CD4-positive, alpha-beta T cell (primary cell): ENCODE measurements at regions of chr15 and their contacts with region 1.

Region 1: DNA sequence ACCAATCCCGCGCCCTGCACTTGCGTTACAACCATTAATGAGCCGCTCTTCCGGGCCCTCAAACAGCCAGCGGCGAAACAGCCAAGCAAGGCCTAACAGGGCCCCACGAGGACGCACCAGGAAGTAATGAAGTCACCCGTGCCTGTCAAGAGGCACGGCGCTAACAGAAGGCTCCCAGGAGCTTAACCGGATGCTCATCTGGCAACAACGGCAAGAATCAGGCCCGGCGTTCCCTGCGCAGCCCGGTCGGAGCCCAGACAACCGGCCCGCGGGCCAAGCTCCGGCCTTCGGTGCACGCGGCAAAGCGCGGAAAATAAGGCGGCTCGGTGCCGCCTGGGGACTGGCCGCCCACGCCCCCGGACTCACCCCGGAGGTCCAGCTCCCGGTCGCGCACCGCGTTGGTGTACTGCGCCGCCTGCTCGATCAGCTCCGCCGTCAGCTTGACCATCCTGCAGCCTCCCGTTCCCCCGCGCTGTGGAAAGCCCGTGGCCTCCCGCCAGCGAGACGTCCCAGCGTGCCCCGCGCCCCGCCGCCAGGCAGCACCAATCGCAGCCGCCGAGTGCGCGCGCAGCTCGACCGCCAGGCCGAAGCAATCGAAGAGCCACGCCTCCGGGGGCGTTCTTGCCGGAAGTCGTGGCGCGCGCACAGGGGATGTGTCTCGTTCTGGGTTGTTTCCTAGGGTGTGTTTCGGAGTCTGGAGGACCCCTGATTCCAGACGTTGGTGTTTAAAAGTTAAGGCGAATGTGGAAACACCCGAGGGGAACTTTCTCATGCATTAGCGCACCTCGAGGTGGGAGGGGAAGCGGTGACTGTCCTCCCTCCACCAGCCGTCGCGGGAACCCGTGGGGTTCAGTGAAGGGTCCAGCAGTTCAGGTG is at the start of gene SNRPA1:
- DNase-seq: peak; percentile 94 to 99 (median 97)
- ATAC-seq: peak; percentile 80
- H3K4me3 ChIP-seq: peak within 1 kb of the TSS; percentile 90
- H3K4me3 Mint-ChIP-seq: peak within 1 kb of the TSS; percentile 100
- H3K27ac ChIP-seq: peak within 1 kb of the TSS; percentile 95 to 98
- H3K27ac Mint-ChIP-seq: peak within 1 kb of the TSS; percentile 98
- H3K4me1 ChIP-seq: peaks cover 35% of the 10 kb centered on the region
- H3K4me1 Mint-ChIP-seq: peaks cover 60% of the 10 kb centered on the region
- H3K27me3 ChIP-seq: no peaks in the 10 kb centered on the region
- H3K27me3 Mint-ChIP-seq: no peaks in the 10 kb centered on the region
- CTCF ChIP-seq: no peak
- total RNA-seq, gene SNRPA1: 214 to 222 TPM

Region 2: DNA sequence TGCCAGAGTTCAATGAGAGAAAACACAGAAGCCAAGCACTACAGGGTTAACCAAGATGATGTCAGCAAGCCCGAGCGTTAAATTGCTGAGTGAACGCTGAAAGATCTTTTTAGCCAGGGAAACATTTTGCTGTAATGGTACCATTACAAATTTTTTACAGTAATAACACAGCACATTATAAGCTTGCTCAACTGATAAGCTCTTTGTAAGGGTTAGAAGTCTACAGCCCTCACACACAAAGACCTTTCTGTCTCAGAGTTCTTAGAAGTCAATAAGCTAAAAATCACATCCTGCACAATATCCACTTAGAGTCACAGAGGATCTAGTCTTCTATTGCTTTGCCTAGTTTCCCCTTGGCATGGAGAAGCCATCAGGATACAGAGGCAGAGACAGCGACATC is 73.1 kb before region 1 on chr15:
- CTCF ChIA-PET with region 1: no interaction called
- POLR2A ChIA-PET with region 1: no interaction called
- intact Hi-C with region 1: no loop called
- DNase-seq: no peak
- ATAC-seq: no peak
- H3K4me3 ChIP-seq: no peak overlapping the region
- H3K4me3 Mint-ChIP-seq: no peak overlapping the region
- H3K27ac ChIP-seq: no peak overlapping the region
- H3K27ac Mint-ChIP-seq: no peak overlapping the region
- H3K4me1 ChIP-seq: peaks cover 8% of the 10 kb centered on the region
- H3K4me1 Mint-ChIP-seq: peaks cover 75% of the 10 kb centered on the region
- H3K27me3 ChIP-seq: no peaks in the 10 kb centered on the region
- H3K27me3 Mint-ChIP-seq: no peaks in the 10 kb centered on the region
- CTCF ChIP-seq: no peak

Region 3: DNA sequence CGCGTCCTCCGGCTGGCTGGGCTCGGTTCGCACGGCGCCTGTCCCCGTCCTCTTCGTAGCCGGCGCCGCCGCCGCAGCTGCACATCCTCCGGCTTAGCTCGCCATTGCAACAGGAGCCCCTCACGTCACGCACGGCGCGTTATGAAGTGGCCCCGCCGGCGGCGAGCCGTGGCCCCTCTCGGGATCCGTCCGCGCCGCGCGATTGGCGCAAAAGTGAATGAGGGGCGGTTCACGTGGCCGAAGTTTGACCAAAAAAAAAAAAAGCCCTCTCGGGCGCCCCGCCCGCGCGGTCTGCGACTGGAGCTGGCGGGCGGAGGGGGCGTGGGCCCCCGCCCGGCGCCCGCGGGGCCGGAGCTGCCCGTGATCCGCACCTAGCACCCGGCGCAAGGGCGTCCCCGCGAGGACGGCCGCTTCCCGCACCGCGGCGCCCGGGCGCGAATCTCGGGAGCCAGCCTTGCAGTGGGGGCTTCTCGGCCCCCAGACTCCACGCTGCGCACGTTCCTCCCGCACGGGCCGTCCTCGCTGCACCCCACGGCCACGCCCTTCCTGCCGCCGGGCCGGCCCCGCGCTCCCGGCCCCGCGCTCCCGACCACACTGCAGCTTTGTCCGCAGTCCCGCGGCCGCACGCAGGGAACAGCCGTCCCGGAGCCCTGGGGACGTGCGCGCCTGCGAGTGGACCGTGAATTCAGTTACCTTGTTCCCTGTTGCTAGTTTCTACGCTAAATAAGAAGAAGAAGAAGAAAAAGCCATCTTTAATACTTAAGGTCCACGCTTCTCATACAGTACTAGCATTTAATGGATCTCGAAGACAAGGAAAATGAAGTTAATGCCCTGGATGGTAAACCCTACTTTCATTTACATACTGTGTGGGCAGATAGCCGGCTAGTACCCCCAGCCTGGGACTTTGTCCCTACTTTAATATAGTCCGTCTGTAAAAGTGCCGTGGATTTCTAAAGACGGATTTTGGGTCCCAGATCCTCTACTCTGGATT is 42.8 kb before region 1 on chr15 and contains the start of gene CHSY1:
- CTCF ChIA-PET with region 1: no interaction called
- POLR2A ChIA-PET with region 1: interaction called, 17 read pairs
- intact Hi-C with region 1: no loop called
- DNase-seq: peak; percentile 61 to 93 (median 76)
- ATAC-seq: peak; percentile 75
- H3K4me3 ChIP-seq: peak within 1 kb of the TSS; percentile 66
- H3K4me3 Mint-ChIP-seq: peak within 1 kb of the TSS; percentile 100
- H3K27ac ChIP-seq: no peak within 1 kb of the TSS
- H3K27ac Mint-ChIP-seq: peak within 1 kb of the TSS; percentile 89
- H3K4me1 ChIP-seq: peaks cover 25% of the 10 kb centered on the region
- H3K4me1 Mint-ChIP-seq: peaks cover 38% of the 10 kb centered on the region
- H3K27me3 ChIP-seq: no peaks in the 10 kb centered on the region
- H3K27me3 Mint-ChIP-seq: no peaks in the 10 kb centered on the region
- CTCF ChIP-seq: no peak
- total RNA-seq, gene CHSY1: 5.8 to 6.7 TPM

Region 4: DNA sequence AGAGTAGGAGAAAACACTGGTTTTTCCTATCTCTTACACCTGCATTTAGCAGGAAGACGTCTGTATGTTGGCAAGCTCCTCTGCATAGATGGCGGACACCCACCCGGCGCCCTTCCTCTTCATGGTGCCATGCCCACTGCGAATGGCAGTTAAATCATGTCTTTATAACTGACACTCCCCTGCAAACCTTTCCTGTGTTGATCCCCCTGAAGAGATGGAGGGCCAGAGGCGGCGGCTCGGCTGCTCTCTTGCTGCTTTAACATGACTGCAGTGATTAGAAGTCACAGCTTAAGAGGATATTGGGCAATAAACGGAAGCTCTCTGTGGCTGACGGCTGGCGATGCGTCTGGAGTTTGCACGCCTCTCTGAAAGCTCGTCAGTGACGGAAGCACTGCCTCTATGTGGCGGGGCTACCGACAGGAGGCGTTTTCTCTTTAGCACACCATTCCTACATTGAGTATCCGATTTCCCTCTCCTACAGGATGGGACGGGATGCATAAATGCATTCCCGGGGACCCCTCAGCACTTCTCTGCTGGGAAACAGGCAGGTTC is 25.6 kb after region 1 on chr15:
- CTCF ChIA-PET with region 1: interaction called, 5 read pairs
- POLR2A ChIA-PET with region 1: interaction called, 27 read pairs
- intact Hi-C with region 1: no loop called
- DNase-seq: peak; percentile 22 to 84 (median 52)
- ATAC-seq: peak; percentile 99
- H3K4me3 ChIP-seq: peak overlapping the region; percentile 47
- H3K4me3 Mint-ChIP-seq: peak overlapping the region; percentile 71
- H3K27ac ChIP-seq: peak overlapping the region; percentile 23 to 49
- H3K27ac Mint-ChIP-seq: peak overlapping the region; percentile 84
- H3K4me1 ChIP-seq: peaks cover 12% of the 10 kb centered on the region
- H3K4me1 Mint-ChIP-seq: peaks cover 16% of the 10 kb centered on the region
- H3K27me3 ChIP-seq: peaks cover 0 to 5% of the 10 kb centered on the region in 2 experiments
- H3K27me3 Mint-ChIP-seq: peaks cover 20% of the 10 kb centered on the region
- CTCF ChIP-seq: peak; percentile 41

Region 5: GRCh38 chr15:101501703-101502373 is 206.9 kb after region 1 on chr15:
- CTCF ChIA-PET with region 1: no interaction called
- POLR2A ChIA-PET with region 1: no interaction called
- intact Hi-C with region 1: loop called in 1 of 2 experiments (anchors 2 kb)
- DNase-seq: peak in 13 of 14 experiments; percentile 7 to 63 (median 24)
- ATAC-seq: peak; percentile 70
- H3K4me3 ChIP-seq: no peak overlapping the region
- H3K4me3 Mint-ChIP-seq: peak overlapping the region; percentile 69
- H3K27ac ChIP-seq: no peak overlapping the region
- H3K27ac Mint-ChIP-seq: no peak overlapping the region
- H3K4me1 ChIP-seq: peaks cover 12% of the 10 kb centered on the region
- H3K4me1 Mint-ChIP-seq: peaks cover 11% of the 10 kb centered on the region
- H3K27me3 ChIP-seq: peaks cover 11% of the 10 kb centered on the region in 2 experiments
- H3K27me3 Mint-ChIP-seq: peaks cover 73% of the 10 kb centered on the region
- CTCF ChIP-seq: peak; percentile 36

Region 6: DNA sequence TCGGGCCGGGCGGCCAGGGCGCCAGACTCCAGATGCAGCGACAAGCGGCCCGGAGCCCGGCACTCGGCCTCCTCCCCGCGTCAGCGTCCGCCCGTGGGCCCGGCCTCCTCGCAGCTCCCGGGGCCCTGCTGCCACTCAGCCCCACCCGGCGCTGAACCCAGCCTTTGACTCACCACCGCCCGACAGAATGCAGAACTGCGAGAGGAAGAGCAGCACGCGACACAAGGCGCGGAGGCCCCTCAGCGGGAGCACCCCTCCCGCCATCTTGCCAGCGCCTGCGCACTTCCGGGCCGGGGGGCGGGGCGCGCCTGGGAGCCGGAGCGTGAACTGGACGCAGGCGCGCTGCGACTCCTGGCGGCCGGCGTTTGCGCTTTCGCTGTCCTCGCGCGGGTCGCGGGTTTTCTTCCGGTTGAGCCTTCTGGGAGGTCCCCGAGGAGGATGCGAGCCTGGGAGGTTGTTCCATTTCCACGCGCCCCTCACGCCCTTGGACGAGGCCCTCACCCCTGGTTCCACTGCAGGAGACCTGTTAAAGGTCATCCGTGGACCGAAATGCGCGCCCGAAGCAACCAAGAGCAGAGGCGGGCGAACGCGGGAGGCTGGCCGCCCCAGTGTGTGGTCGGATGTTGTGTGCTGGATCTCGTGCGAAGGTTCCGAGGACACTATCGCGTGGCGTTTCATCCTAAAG is 357.3 kb after region 1 on chr15 and contains the start of gene TM2D3:
- CTCF ChIA-PET with region 1: interaction called, 3 read pairs
- POLR2A ChIA-PET with region 1: interaction called, 19 read pairs
- intact Hi-C with region 1: loop called (anchors 1 kb)
- DNase-seq: peak; percentile 89 to 99 (median 94)
- ATAC-seq: peak; percentile 94
- H3K4me3 ChIP-seq: peak within 1 kb of the TSS; percentile 82
- H3K4me3 Mint-ChIP-seq: peak within 1 kb of the TSS; percentile 97
- H3K27ac ChIP-seq: peak within 1 kb of the TSS; percentile 96
- H3K27ac Mint-ChIP-seq: peak within 1 kb of the TSS; percentile 98
- H3K4me1 ChIP-seq: peaks cover 24% of the 10 kb centered on the region
- H3K4me1 Mint-ChIP-seq: peaks cover 48% of the 10 kb centered on the region
- H3K27me3 ChIP-seq: no peaks in the 10 kb centered on the region
- H3K27me3 Mint-ChIP-seq: no peaks in the 10 kb centered on the region
- CTCF ChIP-seq: peak; percentile 82
- total RNA-seq, gene TM2D3: 102 to 107 TPM